Activated CD4-positive, alpha-beta T cell treated with anti-CD3 and anti-CD28 coated beads for 36 hours (primary cell): ENCODE measurements at regions of chrX and their contacts with region 1.

Region 1: DNA sequence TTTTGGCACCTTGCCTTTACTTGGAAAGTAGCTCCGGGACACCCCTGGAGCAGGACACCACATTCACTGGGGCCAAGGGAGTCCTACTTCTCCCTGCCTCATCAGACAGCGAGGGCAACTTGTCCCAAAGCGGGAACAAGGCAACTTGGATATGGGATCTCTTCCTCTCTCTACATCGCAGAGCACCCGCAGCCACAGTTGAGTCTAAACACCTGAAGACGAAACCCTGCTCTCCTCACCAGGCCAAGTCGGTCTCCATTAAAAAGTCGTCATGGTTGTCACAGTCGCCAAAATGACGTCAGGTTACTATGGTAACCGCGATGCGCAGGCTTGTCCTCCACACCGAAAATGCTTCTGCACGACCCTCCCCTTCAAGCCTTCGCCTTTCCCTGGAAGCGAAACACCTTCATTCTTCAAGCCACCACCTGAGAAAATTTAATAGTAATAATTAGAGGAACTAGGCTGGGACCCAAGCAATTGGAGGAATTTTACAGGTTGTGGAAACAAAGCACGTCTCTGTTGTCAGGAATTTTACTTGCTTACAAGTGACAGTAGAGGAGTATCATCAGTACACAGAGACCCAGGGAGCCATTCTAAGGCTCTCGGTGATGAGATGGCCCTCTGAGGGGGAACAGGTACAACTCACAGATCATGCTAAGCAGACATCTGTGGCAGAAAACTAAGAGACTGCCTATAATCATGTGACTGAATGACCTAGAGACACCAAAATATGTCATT is 30.5 kb upstream of the TCEAL4 start:
- DNase-seq: peak; percentile 81
- ATAC-seq: peak; percentile 86
- H3K4me3 Mint-ChIP-seq: peak overlapping the region; percentile 89
- H3K27ac Mint-ChIP-seq: peak overlapping the region; percentile 90
- H3K4me1 Mint-ChIP-seq: peaks cover 3% of the 10 kb centered on the region
- H3K27me3 Mint-ChIP-seq: no peaks in the 10 kb centered on the region

Region 2: GRCh38 chrX:103585411-103586313 is 30.8 kb after region 1 on chrX and contains the start of gene TCEAL4:
- CTCF ChIA-PET with region 1: no interaction called
- POLR2A ChIA-PET with region 1: no interaction called
- intact Hi-C with region 1: loop called in 1 of 2 experiments (anchors 2 kb)
- DNase-seq: peak; percentile 68
- ATAC-seq: peak; percentile 85
- H3K4me3 Mint-ChIP-seq: peak within 1 kb of the TSS; percentile 82
- H3K27ac Mint-ChIP-seq: peak within 1 kb of the TSS; percentile 79
- H3K4me1 Mint-ChIP-seq: peaks cover 16% of the 10 kb centered on the region
- H3K27me3 Mint-ChIP-seq: peaks cover under 1% of the 10 kb centered on the region
- total RNA-seq, gene TCEAL4: 17.1 to 18.5 TPM

Region 3: DNA sequence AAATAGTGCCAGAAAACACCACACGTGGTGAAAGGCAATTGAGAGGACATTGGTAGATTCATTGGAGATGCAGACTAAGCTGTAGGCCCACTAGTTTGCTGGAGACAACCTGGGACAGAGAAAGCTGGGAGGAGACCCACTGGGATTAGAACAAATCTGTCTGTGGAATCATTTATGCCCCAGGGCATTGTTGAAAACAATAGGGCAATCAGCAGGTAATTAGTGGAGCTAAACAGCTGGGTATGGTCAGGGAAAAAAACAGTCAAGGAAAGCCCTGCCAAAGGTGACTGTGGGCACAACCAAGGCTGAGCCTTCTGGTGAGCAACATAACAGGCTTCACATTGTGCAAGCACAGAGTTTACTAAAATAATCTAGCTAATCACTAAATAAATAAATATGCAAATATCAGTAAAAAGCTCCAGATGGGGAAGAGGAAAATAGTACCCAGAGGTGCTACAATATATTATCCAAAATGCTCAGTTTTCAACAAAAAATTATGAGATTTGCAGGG is 61.9 kb after region 1 on chrX:
- CTCF ChIA-PET with region 1: no interaction called
- POLR2A ChIA-PET with region 1: no interaction called
- intact Hi-C with region 1: no loop called
- DNase-seq: no peak
- ATAC-seq: no peak
- H3K4me3 Mint-ChIP-seq: no peak overlapping the region
- H3K27ac Mint-ChIP-seq: no peak overlapping the region
- H3K4me1 Mint-ChIP-seq: no peaks in the 10 kb centered on the region
- H3K27me3 Mint-ChIP-seq: no peaks in the 10 kb centered on the region

Region 4: GRCh38 chrX:103629318-103630170 is 74.7 kb after region 1 on chrX:
- CTCF ChIA-PET with region 1: no interaction called
- POLR2A ChIA-PET with region 1: no interaction called
- intact Hi-C with region 1: loop called in 1 of 2 experiments (anchors 2 kb)
- DNase-seq: peak; percentile 55
- ATAC-seq: peak; percentile 58
- H3K4me3 Mint-ChIP-seq: peak overlapping the region; percentile 81
- H3K27ac Mint-ChIP-seq: peak overlapping the region; percentile 87
- H3K4me1 Mint-ChIP-seq: peaks cover 18% of the 10 kb centered on the region
- H3K27me3 Mint-ChIP-seq: no peaks in the 10 kb centered on the region

Region 5: GRCh38 chrX:103678199-103678993 is 123.5 kb after region 1 on chrX:
- CTCF ChIA-PET with region 1: no interaction called
- POLR2A ChIA-PET with region 1: no interaction called
- intact Hi-C with region 1: no loop called
- DNase-seq: no peak
- ATAC-seq: no peak
- H3K4me3 Mint-ChIP-seq: no peak overlapping the region
- H3K27ac Mint-ChIP-seq: no peak overlapping the region
- H3K4me1 Mint-ChIP-seq: peaks cover 5% of the 10 kb centered on the region
- H3K27me3 Mint-ChIP-seq: no peaks in the 10 kb centered on the region

Region 6: DNA sequence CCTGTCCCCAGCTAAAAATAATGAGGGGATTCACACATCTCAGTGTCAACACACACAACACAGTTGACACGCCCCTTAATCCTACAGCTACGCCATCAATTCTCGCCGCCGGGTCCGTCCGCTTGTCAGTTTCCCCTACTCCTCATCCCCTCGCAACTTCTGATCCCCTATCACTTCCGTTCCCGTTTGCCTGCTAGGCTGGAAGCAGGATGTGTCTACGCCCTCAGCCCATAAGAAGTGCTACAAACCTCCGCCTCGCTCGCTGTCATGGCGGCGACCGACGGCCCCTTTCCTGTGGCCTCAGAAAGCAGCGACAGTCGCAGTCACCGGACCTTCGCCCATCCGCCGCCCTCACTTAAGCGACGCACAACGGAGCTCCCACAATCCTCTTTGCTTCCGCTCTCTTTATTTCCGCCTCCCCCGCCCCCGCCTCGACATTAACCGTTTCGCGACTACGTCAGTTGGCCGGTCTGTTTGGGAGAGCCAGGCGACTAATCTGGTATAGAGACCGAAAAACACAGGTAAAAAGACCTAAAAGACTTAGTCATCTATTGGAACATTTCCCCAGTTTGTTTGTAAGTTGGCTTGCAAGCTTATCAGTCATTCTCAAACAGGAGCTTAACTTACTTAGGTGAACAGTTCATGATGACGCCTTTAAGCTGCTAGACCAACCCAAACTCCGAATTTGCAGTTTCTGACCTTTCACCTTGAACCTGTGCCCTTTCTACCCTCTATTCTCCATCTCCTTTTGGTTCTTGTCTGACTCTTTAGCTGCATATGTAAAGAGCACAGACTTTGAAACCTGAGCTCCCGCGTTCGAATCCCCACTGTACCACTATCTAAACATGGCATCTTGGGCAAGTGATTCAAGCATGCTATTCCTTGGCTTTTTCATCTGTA is 602.0 kb after region 1 on chrX and contains the start of gene SLC25A53:
- CTCF ChIA-PET with region 1: no interaction called
- POLR2A ChIA-PET with region 1: no interaction called
- intact Hi-C with region 1: loop called in 1 of 2 experiments (anchors 10 kb)
- DNase-seq: peak; percentile 84
- ATAC-seq: peak; percentile 92
- H3K4me3 Mint-ChIP-seq: peak within 1 kb of the TSS; percentile 94
- H3K27ac Mint-ChIP-seq: peak within 1 kb of the TSS; percentile 99
- H3K4me1 Mint-ChIP-seq: peaks cover 11% of the 10 kb centered on the region
- H3K27me3 Mint-ChIP-seq: no peaks in the 10 kb centered on the region
- total RNA-seq, gene SLC25A53: 3.5 to 5.1 TPM